Activated naive CD4-positive, alpha-beta T cell treated with anti-CD3 and anti-CD28 coated beads for 36 hours (primary cell): ENCODE measurements at regions of chr18 and their contacts with region 1.

Region 1: GRCh38 chr18:3995476-3996102 is 459.5 kb downstream of the DLGAP1 start:
- DNase-seq: peak; percentile 78
- H3K4me3 Mint-ChIP-seq: no peak overlapping the region
- H3K27ac Mint-ChIP-seq: no peak overlapping the region
- H3K4me1 Mint-ChIP-seq: no peaks in the 10 kb centered on the region
- H3K27me3 Mint-ChIP-seq: peaks cover 5% of the 10 kb centered on the region

Region 2: DNA sequence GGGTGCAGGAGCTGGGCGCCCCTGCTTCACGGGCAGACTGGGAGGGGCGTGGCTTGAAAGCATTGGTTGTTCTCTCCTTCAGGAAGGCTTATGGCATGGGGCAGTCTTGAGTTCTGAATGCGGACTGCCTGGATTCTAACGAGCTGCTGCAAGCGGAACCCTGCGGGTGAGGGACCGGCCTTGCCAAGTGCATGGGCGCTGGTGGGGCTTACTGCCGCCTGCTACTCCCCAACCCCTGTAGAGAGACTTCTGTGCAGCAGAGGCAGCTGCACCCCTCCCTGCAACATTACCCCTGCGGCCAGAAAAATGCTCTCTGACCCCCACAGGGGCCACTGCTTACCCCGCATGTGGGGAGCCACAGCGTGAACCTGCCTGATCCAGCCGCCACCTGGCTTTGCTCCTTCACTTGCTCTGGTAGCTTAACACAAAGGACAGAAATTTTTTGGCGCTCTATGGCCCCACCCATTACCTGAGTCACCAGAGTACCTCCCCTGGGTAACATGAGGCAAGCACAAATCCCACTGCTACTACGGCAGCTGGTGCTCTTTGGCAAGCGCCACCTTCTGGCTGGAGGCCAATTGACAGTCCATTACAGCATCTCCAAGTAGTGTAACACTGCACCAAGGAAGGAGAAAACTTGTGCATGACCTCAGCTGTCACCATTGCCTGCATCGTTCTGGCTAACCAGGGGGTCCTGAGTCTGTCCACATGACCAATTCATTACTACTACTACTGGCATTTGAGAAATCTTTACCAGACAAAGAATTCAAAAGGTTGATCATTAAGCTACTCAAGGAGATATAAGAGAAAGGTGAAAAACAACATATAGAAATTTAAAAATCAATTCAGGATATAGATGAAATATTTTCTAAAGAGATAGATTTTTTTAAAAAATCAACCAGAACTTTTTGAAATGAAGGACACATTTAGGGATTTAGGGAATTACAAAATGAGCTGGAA is 698.3 kb before region 1 on chr18:
- CTCF ChIA-PET with region 1: no interaction called
- intact Hi-C with region 1: loop called (anchors 5 kb)
- DNase-seq: peak; percentile 98
- H3K4me3 Mint-ChIP-seq: peak overlapping the region; percentile 93
- H3K27ac Mint-ChIP-seq: peak overlapping the region; percentile 79
- H3K4me1 Mint-ChIP-seq: peaks cover 3% of the 10 kb centered on the region
- H3K27me3 Mint-ChIP-seq: peaks cover 11% of the 10 kb centered on the region

Region 3: GRCh38 chr18:3771121-3771971 is 224.2 kb before region 1 on chr18:
- CTCF ChIA-PET with region 1: interaction called, 79 read pairs
- intact Hi-C with region 1: loop called (anchors 1 kb)
- DNase-seq: peak; percentile 88
- H3K4me3 Mint-ChIP-seq: peak overlapping the region; percentile 55
- H3K27ac Mint-ChIP-seq: no peak overlapping the region
- H3K4me1 Mint-ChIP-seq: peaks cover 6% of the 10 kb centered on the region
- H3K27me3 Mint-ChIP-seq: peaks cover 28% of the 10 kb centered on the region

Region 4: DNA sequence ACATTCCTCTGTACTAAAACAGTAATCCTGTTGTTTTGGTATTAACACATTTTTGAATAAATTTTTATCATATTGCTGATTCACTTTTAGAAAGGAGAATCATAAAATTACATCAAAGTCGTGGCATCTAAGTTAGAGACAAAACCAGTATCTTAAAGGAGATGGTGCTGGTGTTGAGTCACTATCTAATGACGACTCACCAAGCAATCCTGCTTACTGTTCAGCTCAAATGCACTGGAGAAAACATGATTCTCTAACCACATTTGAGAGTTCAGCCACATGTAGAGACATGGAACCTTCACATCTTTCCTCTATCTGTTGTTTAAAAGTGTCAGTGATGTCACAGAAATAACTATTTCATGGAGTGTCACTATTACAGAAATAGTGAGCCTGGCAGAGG is 71.8 kb before region 1 on chr18:
- CTCF ChIA-PET with region 1: no interaction called
- intact Hi-C with region 1: no loop called
- DNase-seq: no peak
- H3K4me3 Mint-ChIP-seq: no peak overlapping the region
- H3K27ac Mint-ChIP-seq: no peak overlapping the region
- H3K4me1 Mint-ChIP-seq: no peaks in the 10 kb centered on the region
- H3K27me3 Mint-ChIP-seq: peaks cover 13% of the 10 kb centered on the region

Region 5: GRCh38 chr18:3966985-3967856 is 28.4 kb before region 1 on chr18:
- CTCF ChIA-PET with region 1: interaction called, 10 read pairs
- intact Hi-C with region 1: no loop called
- DNase-seq: no peak
- H3K4me3 Mint-ChIP-seq: no peak overlapping the region
- H3K27ac Mint-ChIP-seq: no peak overlapping the region
- H3K4me1 Mint-ChIP-seq: no peaks in the 10 kb centered on the region
- H3K27me3 Mint-ChIP-seq: peaks cover 3% of the 10 kb centered on the region

Region 6: GRCh38 chr18:4068552-4069158 is 73.1 kb after region 1 on chr18:
- CTCF ChIA-PET with region 1: interaction called, 3 read pairs
- intact Hi-C with region 1: loop called (anchors 2 kb)
- DNase-seq: peak; percentile 53
- H3K4me3 Mint-ChIP-seq: no peak overlapping the region
- H3K27ac Mint-ChIP-seq: no peak overlapping the region
- H3K4me1 Mint-ChIP-seq: no peaks in the 10 kb centered on the region
- H3K27me3 Mint-ChIP-seq: peaks cover 9% of the 10 kb centered on the region